ENCODE measurements at regions of chr3 and their contacts with region 1.

Region 1: DNA sequence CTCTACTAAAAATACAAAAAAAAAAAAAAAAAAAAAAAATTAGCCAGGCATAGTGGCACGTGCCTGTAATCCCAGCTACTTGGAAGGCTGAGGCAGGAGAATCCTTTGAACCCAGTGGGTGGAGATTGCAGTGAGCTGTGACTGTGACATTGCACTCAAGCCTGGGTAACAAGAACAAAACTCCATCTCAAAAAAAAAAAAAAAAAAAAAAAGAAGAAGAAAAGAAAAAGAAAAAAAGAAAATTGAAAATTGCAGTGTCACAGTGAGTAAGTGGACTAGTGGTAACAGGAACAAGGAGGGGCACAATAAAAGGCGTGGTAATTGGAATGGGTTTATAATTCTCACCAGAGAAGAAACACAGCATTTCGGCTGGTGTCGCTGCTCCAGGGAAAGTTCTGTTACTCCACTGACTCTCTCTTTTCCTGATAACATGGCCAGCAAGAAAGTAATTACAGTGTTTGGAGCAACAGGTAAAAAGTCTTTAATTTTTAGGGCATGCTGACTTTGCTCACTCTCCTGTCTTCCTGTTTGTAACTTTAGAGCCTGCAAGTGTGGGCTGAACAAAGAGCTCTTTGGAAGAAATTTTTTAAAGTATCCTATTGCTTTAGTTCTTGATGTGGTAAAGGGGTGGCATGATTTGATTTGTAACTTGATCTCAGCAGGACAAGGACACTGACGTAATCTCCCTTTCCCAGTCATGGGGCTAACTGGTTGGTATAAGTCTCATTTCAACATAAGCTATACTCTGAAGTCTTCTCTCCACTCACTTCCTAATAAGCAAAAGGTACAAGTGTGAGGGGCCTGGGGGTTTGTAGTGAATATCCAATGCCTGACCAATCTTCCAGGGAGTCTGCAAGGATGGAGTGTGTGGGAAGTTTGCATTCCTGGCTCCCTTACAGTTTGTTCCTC is 22.0 kb upstream of the TRA2B start:
- DNase-seq: no peak
- H3K4me3 Mint-ChIP-seq: no peak overlapping the region
- H3K27ac Mint-ChIP-seq: no peak overlapping the region
- H3K4me1 Mint-ChIP-seq: no peaks in the 10 kb centered on the region
- H3K27me3 Mint-ChIP-seq: peaks cover 2% of the 10 kb centered on the region

Region 2: DNA sequence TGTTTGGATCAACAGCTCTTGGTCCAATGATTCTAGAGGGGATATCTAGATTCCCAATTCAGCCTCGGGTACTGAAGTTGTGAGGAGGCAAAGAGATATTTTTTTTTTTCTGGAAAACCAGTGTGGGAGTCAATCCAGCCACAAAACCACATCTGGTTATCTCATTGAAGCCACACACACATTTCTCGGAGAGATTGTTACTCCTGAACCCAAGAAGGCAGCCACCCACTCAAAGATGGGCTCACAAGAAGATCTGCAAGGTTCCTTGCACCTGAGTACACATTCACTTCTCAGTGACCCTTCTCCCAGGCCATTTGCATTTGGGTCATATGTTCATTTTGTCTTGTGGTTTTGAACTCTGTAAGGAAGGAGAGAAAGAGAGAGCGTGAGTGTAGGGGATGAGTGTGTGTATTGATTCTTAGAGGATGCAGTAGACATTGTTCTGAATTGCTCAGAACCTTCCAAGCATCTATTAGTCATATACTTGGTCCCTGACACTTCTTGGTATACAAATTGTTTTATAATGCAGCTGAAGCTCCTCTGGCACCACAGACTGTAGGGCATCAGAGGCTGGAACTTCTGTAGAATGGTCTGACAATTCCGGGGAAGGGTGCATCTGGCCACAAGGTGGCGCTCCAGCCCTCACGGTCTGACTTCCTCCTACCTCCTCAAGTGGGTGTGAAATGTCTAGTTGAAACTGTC is 17.3 kb after region 1 on chr3:
- CTCF ChIA-PET with region 1: interaction called, 5 read pairs
- POLR2A ChIA-PET with region 1: interaction called, 7 read pairs
- intact Hi-C with region 1: loop called (anchors 1 kb)
- DNase-seq: peak; percentile 92
- H3K4me3 Mint-ChIP-seq: no peak overlapping the region
- H3K27ac Mint-ChIP-seq: peak overlapping the region; percentile 23
- H3K4me1 Mint-ChIP-seq: peaks cover 15% of the 10 kb centered on the region
- H3K27me3 Mint-ChIP-seq: no peaks in the 10 kb centered on the region

Region 3: DNA sequence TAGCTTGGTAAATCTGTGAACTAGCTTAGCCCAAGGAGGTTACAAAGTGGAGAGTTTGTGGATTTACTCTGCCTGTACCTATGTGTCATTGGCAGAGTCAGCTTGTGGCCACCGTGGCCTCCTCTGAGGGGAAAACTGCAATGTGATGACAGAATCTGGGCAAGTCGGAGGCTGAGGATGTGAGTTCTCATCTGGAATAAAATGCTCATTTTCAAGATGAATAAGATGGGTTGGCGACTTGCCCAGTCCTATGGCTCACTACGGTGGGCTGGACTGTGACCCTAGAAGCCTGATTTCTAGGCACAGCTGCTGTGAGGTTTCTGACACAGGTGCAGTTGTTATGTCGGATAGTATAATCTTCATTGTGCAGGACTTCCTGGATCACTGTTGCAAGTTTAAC is 65.3 kb after region 1 on chr3:
- CTCF ChIA-PET with region 1: no interaction called
- POLR2A ChIA-PET with region 1: no interaction called
- intact Hi-C with region 1: no loop called
- DNase-seq: peak; percentile 74
- H3K4me3 Mint-ChIP-seq: no peak overlapping the region
- H3K27ac Mint-ChIP-seq: no peak overlapping the region
- H3K4me1 Mint-ChIP-seq: peaks cover 8% of the 10 kb centered on the region
- H3K27me3 Mint-ChIP-seq: peaks cover 12% of the 10 kb centered on the region

Measured in activated CD4-positive, alpha-beta memory T cell treated with anti-CD3 and anti-CD28 coated beads for 36 hours (primary cell).